CD8-positive, alpha-beta T cell (primary cell): ENCODE measurements at regions of chr6 and their contacts with region 1.

Region 1: GRCh38 chr6:136822376-136823127 is at the start of gene PEX7:
- DNase-seq: peak; percentile 76 to 94 (median 84)
- ATAC-seq: peak; percentile 91
- H3K4me3 ChIP-seq: peak within 1 kb of the TSS; percentile 57 to 77
- H3K4me3 Mint-ChIP-seq: peak within 1 kb of the TSS; percentile 93
- H3K27ac ChIP-seq: peak within 1 kb of the TSS; percentile 70 to 82
- H3K27ac Mint-ChIP-seq: peak within 1 kb of the TSS; percentile 95
- H3K4me1 ChIP-seq: peaks cover 14% of the 10 kb centered on the region
- H3K4me1 Mint-ChIP-seq: peaks cover 30% of the 10 kb centered on the region
- H3K27me3 ChIP-seq: no peaks in the 10 kb centered on the region
- H3K27me3 Mint-ChIP-seq: peaks cover 3% of the 10 kb centered on the region
- CTCF ChIP-seq: peak; percentile 68
- total RNA-seq, gene PEX7: 2.6 to 2.8 TPM

Region 2: DNA sequence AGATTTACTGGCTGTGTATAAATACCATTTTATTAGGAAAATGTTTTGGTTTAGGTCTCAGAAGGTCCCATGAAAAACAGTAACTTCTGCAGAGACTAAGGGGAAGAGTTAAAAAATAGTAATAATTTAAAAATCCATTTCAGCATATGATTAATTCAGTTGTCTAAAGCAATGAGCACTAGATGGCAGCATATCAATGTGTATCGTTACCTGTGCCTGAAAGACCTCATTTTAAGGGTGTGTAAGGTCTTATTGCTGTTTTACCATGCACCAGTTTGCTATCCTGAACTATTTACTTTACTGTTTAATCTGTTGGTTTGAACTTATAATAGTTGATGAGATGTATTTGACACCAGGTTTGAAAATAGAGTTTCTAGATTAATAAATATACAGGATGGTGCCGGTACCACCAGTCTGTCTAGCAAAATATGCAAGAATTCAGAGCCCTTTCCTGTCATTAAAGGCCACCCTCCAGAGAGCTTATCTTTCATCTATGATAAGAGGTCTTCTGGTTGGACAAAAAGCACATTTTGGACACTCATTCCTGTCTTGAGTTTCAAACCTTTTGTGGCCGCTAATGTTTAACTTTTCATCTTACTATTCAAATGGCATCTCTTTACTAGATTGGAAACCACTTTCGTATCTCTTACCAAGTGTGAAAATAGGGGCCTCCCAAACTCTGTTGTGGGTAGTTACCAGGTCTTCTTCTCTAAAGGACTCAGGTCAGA is 1316.1 kb before region 1 on chr6:
- CTCF ChIA-PET with region 1: no interaction called
- POLR2A ChIA-PET with region 1: no interaction called
- intact Hi-C with region 1: loop called in 1 of 2 experiments (anchors 10 kb)
- DNase-seq: peak in 3 of 9 experiments; percentile 7 to 76 (median 65)
- ATAC-seq: peak; percentile 82
- H3K4me3 ChIP-seq: no peak overlapping the region
- H3K4me3 Mint-ChIP-seq: peak overlapping the region; percentile 13
- H3K27ac ChIP-seq: peak overlapping the region in 1 of 2 experiments; percentile 30
- H3K27ac Mint-ChIP-seq: no peak overlapping the region
- H3K4me1 ChIP-seq: no peaks in the 10 kb centered on the region
- H3K4me1 Mint-ChIP-seq: peaks cover 4% of the 10 kb centered on the region
- H3K27me3 ChIP-seq: no peaks in the 10 kb centered on the region
- H3K27me3 Mint-ChIP-seq: no peaks in the 10 kb centered on the region
- CTCF ChIP-seq: peak; percentile 63

Region 3: DNA sequence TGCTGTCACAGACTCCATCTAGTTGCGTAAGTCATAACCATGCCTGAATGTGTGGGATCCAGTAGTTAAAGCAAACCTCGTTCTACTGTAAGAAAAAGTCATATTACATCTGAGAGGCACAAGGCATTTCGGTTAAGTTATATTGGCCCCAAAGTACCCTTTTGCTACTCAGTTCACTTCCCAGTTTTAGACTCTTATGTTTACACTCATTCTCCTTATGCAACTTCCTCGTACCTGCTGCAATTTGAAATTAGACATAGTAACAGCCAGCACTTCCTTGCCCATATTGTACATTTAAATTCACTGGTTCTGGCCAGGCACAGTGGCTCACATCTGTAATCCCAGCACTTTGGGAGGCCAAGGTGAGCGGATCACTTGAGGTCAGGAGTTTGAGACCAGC is 36.9 kb after region 1 on chr6:
- CTCF ChIA-PET with region 1: no interaction called
- POLR2A ChIA-PET with region 1: no interaction called
- intact Hi-C with region 1: no loop called
- DNase-seq: no peak
- ATAC-seq: no peak
- H3K4me3 ChIP-seq: no peak overlapping the region
- H3K4me3 Mint-ChIP-seq: no peak overlapping the region
- H3K27ac ChIP-seq: no peak overlapping the region
- H3K27ac Mint-ChIP-seq: no peak overlapping the region
- H3K4me1 ChIP-seq: no peaks in the 10 kb centered on the region
- H3K4me1 Mint-ChIP-seq: no peaks in the 10 kb centered on the region
- H3K27me3 ChIP-seq: no peaks in the 10 kb centered on the region
- H3K27me3 Mint-ChIP-seq: no peaks in the 10 kb centered on the region
- CTCF ChIP-seq: no peak